ENCODE measurements at regions of chr20 and their contacts with region 1.

Region 1: GRCh38 chr20:63635431-63636141 is 8.7 kb upstream of the GMEB2 start:
- DNase-seq: no peak
- H3K4me3 ChIP-seq: no peak overlapping the region
- H3K27ac ChIP-seq: peak overlapping the region in 1 of 2 donors; percentile 38
- H3K4me1 ChIP-seq: no peaks in the 10 kb centered on the region
- H3K27me3 ChIP-seq: no peaks in the 10 kb centered on the region
- CTCF ChIP-seq: no peak
- POLR2A ChIP-seq: no peak

Region 2: DNA sequence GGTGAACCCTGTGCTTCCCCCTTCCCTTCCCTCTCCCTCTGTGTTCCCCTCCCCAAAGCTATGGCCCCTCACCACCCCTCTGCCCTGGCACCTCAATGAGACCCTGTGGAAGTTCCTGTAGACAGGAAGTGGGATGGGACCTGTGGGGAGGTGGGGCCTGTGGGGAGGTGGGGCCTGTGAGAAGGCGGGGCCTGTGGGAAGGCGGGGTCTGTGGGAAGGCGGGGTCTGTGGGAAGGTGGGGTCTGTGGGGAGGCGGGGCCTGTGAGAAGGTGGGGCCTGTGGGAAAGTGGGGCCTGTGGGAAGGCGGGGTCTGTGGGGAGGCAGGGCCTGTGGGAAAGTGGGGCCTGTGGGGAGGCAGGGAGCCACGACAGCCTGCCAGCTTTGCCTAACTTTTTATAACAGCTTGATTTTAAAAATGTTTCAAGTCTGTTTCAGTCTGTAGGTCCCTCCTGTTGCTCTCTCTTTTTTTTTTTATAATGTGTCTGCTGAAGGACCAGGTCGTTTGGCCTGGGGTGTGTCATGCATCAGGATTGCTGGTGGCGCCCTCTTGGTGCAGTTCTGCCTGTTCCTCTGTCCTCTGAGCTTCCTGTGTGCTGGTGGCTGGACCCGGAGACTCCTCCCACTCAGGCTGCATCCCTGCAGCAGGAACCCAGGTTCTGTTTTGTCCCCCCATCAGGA is 1063.8 kb before region 1 on chr20:
- intact Hi-C with region 1: no loop called
- DNase-seq: no peak
- H3K4me3 ChIP-seq: no peak overlapping the region
- H3K27ac ChIP-seq: no peak overlapping the region
- H3K4me1 ChIP-seq: no peaks in the 10 kb centered on the region
- H3K27me3 ChIP-seq: peaks cover 0 to 92% of the 10 kb centered on the region in 2 donors
- CTCF ChIP-seq: no peak
- POLR2A ChIP-seq: no peak

Region 3: DNA sequence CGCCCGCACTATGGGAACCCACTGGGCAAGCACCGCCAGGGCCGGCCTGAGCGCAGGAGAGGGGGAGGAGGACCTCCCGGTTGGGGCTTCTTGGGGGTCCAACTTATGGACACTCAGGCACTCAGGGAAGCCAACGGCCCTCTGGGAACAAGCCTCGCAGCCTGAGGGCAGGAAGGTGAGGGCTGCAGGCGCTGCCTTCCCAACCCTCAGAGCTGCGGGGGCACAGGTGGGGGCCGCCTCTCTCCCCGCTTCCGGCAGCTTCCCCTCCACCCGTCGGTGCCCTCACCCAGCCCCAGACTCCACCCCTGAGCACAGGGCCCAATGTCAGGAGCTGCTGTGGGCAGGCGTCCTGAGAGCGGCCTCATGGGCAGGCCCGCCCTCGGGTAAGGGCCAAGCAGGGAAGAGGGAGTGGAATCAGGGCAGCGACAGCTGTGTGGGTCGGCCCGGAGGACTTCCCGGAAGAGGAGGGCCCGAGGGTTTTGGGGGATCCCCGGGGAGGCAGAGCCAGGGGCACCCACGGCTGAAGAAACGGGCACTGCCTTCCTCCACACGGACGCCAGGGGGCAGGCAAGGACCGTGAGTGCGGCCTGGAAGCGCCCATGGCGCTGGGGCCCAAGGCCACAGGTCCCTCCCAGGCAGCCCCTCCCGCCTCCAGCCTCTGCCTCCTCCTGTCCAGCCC is 97.9 kb before region 1 on chr20:
- intact Hi-C with region 1: loop called (anchors 10 kb)
- DNase-seq: peak; percentile 82 to 89
- H3K4me3 ChIP-seq: peak overlapping the region; percentile 17 to 53 (median 37)
- H3K27ac ChIP-seq: peak overlapping the region; percentile 84 to 85
- H3K4me1 ChIP-seq: peaks cover 10 to 17% of the 10 kb centered on the region in 2 donors
- H3K27me3 ChIP-seq: peaks cover 4 to 10% of the 10 kb centered on the region in 2 donors
- CTCF ChIP-seq: peak; percentile 89 to 98 (median 98)
- POLR2A ChIP-seq: no peak

Region 4: GRCh38 chr20:63594043-63594561 is 41.5 kb before region 1 on chr20:
- intact Hi-C with region 1: no loop called
- DNase-seq: no peak
- H3K4me3 ChIP-seq: no peak overlapping the region
- H3K27ac ChIP-seq: peak overlapping the region; percentile 29 to 91
- H3K4me1 ChIP-seq: no peaks in the 10 kb centered on the region
- H3K27me3 ChIP-seq: no peaks in the 10 kb centered on the region
- CTCF ChIP-seq: no peak
- POLR2A ChIP-seq: no peak

Measured in breast epithelium (tissue), 4 donors.